OCI-LY7 (cell line): ENCODE measurements at regions of chr6 and their contacts with region 1.

Region 1: GRCh38 chr6:130885392-130886192 is 58.4 kb downstream of the SMLR1 start:
- DNase-seq: peak; percentile 81
- H3K4me3 ChIP-seq: no peak overlapping the region
- H3K27ac ChIP-seq: no peak overlapping the region
- H3K4me1 ChIP-seq: no peaks in the 10 kb centered on the region
- CTCF ChIP-seq: peak; percentile 98

Region 2: DNA sequence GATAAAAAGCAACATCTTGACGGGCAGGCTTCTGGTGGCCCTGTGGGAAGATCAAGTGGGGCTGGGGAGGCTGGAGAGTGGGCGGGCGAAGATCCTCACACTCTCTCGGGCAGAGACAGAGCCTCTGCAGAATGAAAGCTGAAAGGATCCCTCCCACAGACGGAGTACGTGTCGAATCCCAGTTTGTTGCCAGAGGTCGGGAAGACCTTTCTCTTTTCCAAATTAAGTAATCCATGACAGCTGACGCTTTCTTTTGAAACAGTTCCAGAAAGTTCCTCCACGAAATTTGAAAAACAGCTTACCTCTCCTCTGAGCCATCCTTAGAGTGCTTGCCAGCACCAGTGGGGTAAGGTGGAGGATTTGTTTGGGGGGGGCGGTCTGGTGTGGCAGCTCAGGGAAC is 214.0 kb before region 1 on chr6:
- CTCF ChIA-PET with region 1: no interaction called
- POLR2A ChIA-PET with region 1: no interaction called
- intact Hi-C with region 1: no loop called
- DNase-seq: no peak
- H3K4me3 ChIP-seq: no peak overlapping the region
- H3K27ac ChIP-seq: no peak overlapping the region
- H3K4me1 ChIP-seq: no peaks in the 10 kb centered on the region
- CTCF ChIP-seq: no peak

Region 3: GRCh38 chr6:130872250-130873095 is 13.1 kb before region 1 on chr6:
- CTCF ChIA-PET with region 1: no interaction called
- POLR2A ChIA-PET with region 1: interaction called, 11 read pairs
- intact Hi-C with region 1: no loop called
- DNase-seq: peak; percentile 67
- H3K4me3 ChIP-seq: no peak overlapping the region
- H3K27ac ChIP-seq: no peak overlapping the region
- H3K4me1 ChIP-seq: no peaks in the 10 kb centered on the region
- CTCF ChIP-seq: peak; percentile 99

Region 4: GRCh38 chr6:131063028-131063763 is 177.6 kb after region 1 on chr6 and contains the start of gene EPB41L2:
- CTCF ChIA-PET with region 1: no interaction called
- POLR2A ChIA-PET with region 1: interaction called, 5 read pairs
- intact Hi-C with region 1: loop called (anchors 2 kb)
- DNase-seq: peak; percentile 94
- H3K4me3 ChIP-seq: peak within 1 kb of the TSS; percentile 95
- H3K27ac ChIP-seq: peak within 1 kb of the TSS; percentile 49
- H3K4me1 ChIP-seq: peaks cover 24% of the 10 kb centered on the region
- CTCF ChIP-seq: 0 out of 2 replicates have a peak, but pooled peaks have one; percentile 13
- total RNA-seq, gene EPB41L2: 36.7 and 37.2 TPM in 2 replicates

Region 5: DNA sequence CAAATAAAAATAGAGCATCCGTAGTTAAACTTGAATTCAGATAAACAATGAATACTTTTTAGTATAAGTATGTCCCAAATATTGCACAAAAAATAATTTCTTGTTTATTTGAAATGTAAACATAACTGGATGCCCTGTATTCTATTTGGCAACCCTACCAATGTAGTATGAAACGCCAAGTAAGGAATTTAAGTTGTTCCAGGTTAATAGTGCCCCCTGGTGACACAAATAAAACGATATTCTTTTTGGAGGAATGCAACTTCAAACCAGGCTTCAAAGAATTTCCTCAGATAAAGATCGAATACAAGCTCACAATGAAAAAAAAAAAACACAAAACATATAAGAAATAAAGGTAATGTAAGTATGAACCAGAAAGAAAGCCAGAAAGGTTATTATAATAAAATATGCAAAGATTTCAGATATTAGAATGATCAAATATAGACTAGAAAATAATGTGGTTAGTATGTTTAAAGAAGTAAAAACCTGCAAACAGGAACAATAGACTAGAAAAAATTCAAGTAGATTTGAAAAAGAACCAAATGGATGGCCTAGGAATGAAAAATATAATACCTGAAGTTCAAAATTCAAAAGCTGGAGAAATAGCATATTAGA is 231.3 kb after region 1 on chr6:
- CTCF ChIA-PET with region 1: interaction called, 5 read pairs
- POLR2A ChIA-PET with region 1: interaction called, 3 read pairs
- intact Hi-C with region 1: loop called (anchors 1 kb)
- DNase-seq: peak; percentile 65
- H3K4me3 ChIP-seq: no peak overlapping the region
- H3K27ac ChIP-seq: no peak overlapping the region
- H3K4me1 ChIP-seq: no peaks in the 10 kb centered on the region
- CTCF ChIP-seq: peak; percentile 86

Region 6: GRCh38 chr6:131167773-131168172 is 282.2 kb after region 1 on chr6:
- CTCF ChIA-PET with region 1: interaction called, 3 read pairs
- POLR2A ChIA-PET with region 1: no interaction called
- intact Hi-C with region 1: loop called (anchors 1 kb)
- DNase-seq: no peak
- H3K4me3 ChIP-seq: no peak overlapping the region
- H3K27ac ChIP-seq: no peak overlapping the region
- H3K4me1 ChIP-seq: no peaks in the 10 kb centered on the region
- CTCF ChIP-seq: peak; percentile 60

Region 7: GRCh38 chr6:131532580-131533039 is 647.0 kb after region 1 on chr6:
- CTCF ChIA-PET with region 1: no interaction called
- POLR2A ChIA-PET with region 1: no interaction called
- intact Hi-C with region 1: loop called (anchors 2 kb)
- DNase-seq: no peak
- H3K4me3 ChIP-seq: no peak overlapping the region
- H3K27ac ChIP-seq: no peak overlapping the region
- H3K4me1 ChIP-seq: peaks cover 12% of the 10 kb centered on the region
- CTCF ChIP-seq: no peak